Body of pancreas (tissue), 4 donors: ENCODE measurements at regions of chr4 and their contacts with region 1.

Region 1: GRCh38 chr4:140012688-140013486 is 141.1 kb downstream of the MAML3 start:
- DNase-seq: peak; percentile 77 to 88 (median 80)
- ATAC-seq: peak; percentile 97
- H3K4me3 ChIP-seq: no peak overlapping the region
- H3K27ac ChIP-seq: peak overlapping the region in 3 of 4 donors; percentile 36 to 42 (median 39)
- H3K4me1 ChIP-seq: peaks cover 17% of the 10 kb centered on the region
- H3K27me3 ChIP-seq: no peaks in the 10 kb centered on the region
- CTCF ChIP-seq: peak in 6 of 7 experiments; percentile 50 to 89 (median 82)
- POLR2A ChIP-seq: no peak

Region 2: GRCh38 chr4:139794158-139794954 is 218.5 kb before region 1 on chr4:
- intact Hi-C with region 1: no loop called
- DNase-seq: no peak
- ATAC-seq: no peak
- H3K4me3 ChIP-seq: no peak overlapping the region
- H3K27ac ChIP-seq: no peak overlapping the region
- H3K4me1 ChIP-seq: peaks cover 11% of the 10 kb centered on the region
- H3K27me3 ChIP-seq: no peaks in the 10 kb centered on the region
- CTCF ChIP-seq: no peak
- POLR2A ChIP-seq: no peak

Region 3: GRCh38 chr4:140252742-140253555 is 240.1 kb after region 1 on chr4:
- intact Hi-C with region 1: loop called (anchors 10 kb)
- DNase-seq: peak; percentile 65 to 77 (median 70)
- ATAC-seq: peak; percentile 86
- H3K4me3 ChIP-seq: peak overlapping the region; percentile 29 to 54
- H3K27ac ChIP-seq: peak overlapping the region; percentile 55 to 89 (median 84)
- H3K4me1 ChIP-seq: peaks cover 26% of the 10 kb centered on the region
- H3K27me3 ChIP-seq: no peaks in the 10 kb centered on the region
- CTCF ChIP-seq: peak; percentile 69 to 98 (median 88)
- POLR2A ChIP-seq: peak; percentile 13 to 52 (median 50)